K562 (cell line): ENCODE measurements at regions of chr5 and their contacts with region 1.

Region 1: GRCh38 chr5:111107371-111107770 is 15.2 kb downstream of the WDR36 start:
- DNase-seq: no peak
- ATAC-seq: no peak
- H3K4me3 ChIP-seq: no peak overlapping the region
- H3K27ac ChIP-seq: no peak overlapping the region
- H3K4me1 ChIP-seq: no peaks in the 10 kb centered on the region
- H3K27me3 ChIP-seq: no peaks in the 10 kb centered on the region
- CTCF ChIP-seq: no peak
- EP300 ChIP-seq: no peak
- POLR2A ChIP-seq: no peak
- RAD21 ChIP-seq: no peak

Region 2: DNA sequence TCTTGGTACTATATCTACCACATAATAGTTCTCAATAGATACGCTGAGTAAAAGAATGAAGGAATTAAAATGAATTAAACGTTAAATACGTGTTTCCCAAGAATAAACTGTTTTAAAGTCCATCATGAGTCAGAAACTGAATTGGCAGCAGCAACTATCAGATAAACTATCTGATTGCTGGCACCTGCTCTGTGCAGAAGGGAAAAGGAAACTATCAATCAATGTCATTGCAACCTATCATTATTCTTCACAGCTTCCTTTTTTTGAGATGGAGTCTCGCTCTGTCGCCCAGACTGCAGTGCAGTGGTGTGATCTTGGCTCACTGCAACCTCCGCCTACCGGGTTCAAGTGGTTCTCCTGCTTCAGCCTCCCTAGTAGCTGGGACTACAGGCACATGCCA is 24.0 kb before region 1 on chr5:
- CTCF ChIA-PET with region 1: no interaction called
- POLR2A ChIA-PET with region 1: no interaction called
- in situ Hi-C with region 1: no loop called
- intact Hi-C with region 1: no loop called
- DNase-seq: peak in 1 of 4 experiments; percentile 38
- ATAC-seq: peak; percentile 85
- H3K4me3 ChIP-seq: no peak overlapping the region
- H3K27ac ChIP-seq: no peak overlapping the region
- H3K4me1 ChIP-seq: 0 out of 5 replicates have a peak, but pooled peaks cover 0 to 3% of the 10 kb centered on the region in 2 experiments
- H3K27me3 ChIP-seq: no peaks in the 10 kb centered on the region
- CTCF ChIP-seq: no peak
- EP300 ChIP-seq: peak; percentile 88
- POLR2A ChIP-seq: no peak
- RAD21 ChIP-seq: no peak

Region 3: GRCh38 chr5:111124793-111125192 is 17.4 kb after region 1 on chr5:
- CTCF ChIA-PET with region 1: no interaction called
- POLR2A ChIA-PET with region 1: no interaction called
- in situ Hi-C with region 1: no loop called
- intact Hi-C with region 1: loop called (anchors 2 kb)
- DNase-seq: no peak
- ATAC-seq: no peak
- H3K4me3 ChIP-seq: no peak overlapping the region
- H3K27ac ChIP-seq: no peak overlapping the region
- H3K4me1 ChIP-seq: no peaks in the 10 kb centered on the region
- H3K27me3 ChIP-seq: no peaks in the 10 kb centered on the region
- CTCF ChIP-seq: no peak
- EP300 ChIP-seq: no peak
- POLR2A ChIP-seq: no peak
- RAD21 ChIP-seq: no peak

Region 4: DNA sequence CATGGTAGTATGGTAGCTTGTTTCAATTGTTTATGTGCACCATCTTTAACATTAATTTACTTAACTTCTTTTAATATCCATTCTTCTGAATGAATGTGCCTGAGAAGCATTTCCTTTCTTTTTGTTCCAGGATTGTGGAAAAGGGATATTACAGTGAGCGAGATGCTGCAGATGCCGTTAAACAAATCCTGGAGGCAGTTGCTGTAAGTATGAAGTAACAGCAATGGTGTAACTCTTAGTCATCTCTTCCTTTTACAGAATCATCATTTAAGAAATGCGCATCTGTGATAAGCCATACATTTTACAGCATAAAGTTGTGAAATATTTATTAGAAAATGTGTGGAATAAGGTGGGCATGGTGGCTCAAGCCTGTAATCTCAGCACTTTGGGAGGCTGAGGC is 287.2 kb after region 1 on chr5:
- CTCF ChIA-PET with region 1: no interaction called
- POLR2A ChIA-PET with region 1: no interaction called
- in situ Hi-C with region 1: no loop called
- intact Hi-C with region 1: no loop called
- DNase-seq: no peak
- ATAC-seq: no peak
- H3K4me3 ChIP-seq: no peak overlapping the region
- H3K27ac ChIP-seq: no peak overlapping the region
- H3K4me1 ChIP-seq: no peaks in the 10 kb centered on the region
- H3K27me3 ChIP-seq: no peaks in the 10 kb centered on the region
- CTCF ChIP-seq: no peak
- EP300 ChIP-seq: no peak
- POLR2A ChIP-seq: no peak
- RAD21 ChIP-seq: no peak